Activated T-helper 1 cell treated with anti-CD3 and anti-CD28 coated beads, Interleukin-12 subunit alpha, Interleukin-12 subunit beta, Interleukin-2, Interleukin-4 antibody, amounts not matched to agents 30 ng/mL and 10 ng/mL and 1 ng/mL, durations not matched to agents 14 hours and 24 hours and 36 hours (primary cell): ENCODE measurements at regions of chr2 and their contacts with region 1.

Region 1: GRCh38 chr2:201257956-201258665 is 2.2 kb upstream of the CASP8 start:
- DNase-seq: peak; percentile 93
- H3K4me3 Mint-ChIP-seq: peak overlapping the region; percentile 91
- H3K27ac Mint-ChIP-seq: peak overlapping the region; percentile 100
- H3K4me1 Mint-ChIP-seq: peaks cover 84% of the 10 kb centered on the region
- H3K27me3 Mint-ChIP-seq: no peaks in the 10 kb centered on the region

Region 2: GRCh38 chr2:201130524-201131186 is 127.5 kb before region 1 on chr2:
- intact Hi-C with region 1: loop called (anchors 1 kb)
- DNase-seq: peak; percentile 45
- H3K4me3 Mint-ChIP-seq: peak overlapping the region; percentile 90
- H3K27ac Mint-ChIP-seq: peak overlapping the region; percentile 99
- H3K4me1 Mint-ChIP-seq: peaks cover 56% of the 10 kb centered on the region
- H3K27me3 Mint-ChIP-seq: no peaks in the 10 kb centered on the region

Region 3: GRCh38 chr2:201242571-201243277 is 15.4 kb before region 1 on chr2:
- intact Hi-C with region 1: loop called (anchors 1 kb)
- DNase-seq: no peak
- H3K4me3 Mint-ChIP-seq: no peak overlapping the region
- H3K27ac Mint-ChIP-seq: no peak overlapping the region
- H3K4me1 Mint-ChIP-seq: peaks cover 36% of the 10 kb centered on the region
- H3K27me3 Mint-ChIP-seq: no peaks in the 10 kb centered on the region

Region 4: GRCh38 chr2:201642579-201643215 is 384.6 kb after region 1 on chr2:
- intact Hi-C with region 1: loop called (anchors 5 kb)
- DNase-seq: peak; percentile 84
- H3K4me3 Mint-ChIP-seq: peak overlapping the region; percentile 89
- H3K27ac Mint-ChIP-seq: peak overlapping the region; percentile 92
- H3K4me1 Mint-ChIP-seq: peaks cover 18% of the 10 kb centered on the region
- H3K27me3 Mint-ChIP-seq: peaks cover 3% of the 10 kb centered on the region